Ascending aorta (tissue), 2 donors: ENCODE measurements at regions of chr5 and their contacts with region 1.

Region 1: DNA sequence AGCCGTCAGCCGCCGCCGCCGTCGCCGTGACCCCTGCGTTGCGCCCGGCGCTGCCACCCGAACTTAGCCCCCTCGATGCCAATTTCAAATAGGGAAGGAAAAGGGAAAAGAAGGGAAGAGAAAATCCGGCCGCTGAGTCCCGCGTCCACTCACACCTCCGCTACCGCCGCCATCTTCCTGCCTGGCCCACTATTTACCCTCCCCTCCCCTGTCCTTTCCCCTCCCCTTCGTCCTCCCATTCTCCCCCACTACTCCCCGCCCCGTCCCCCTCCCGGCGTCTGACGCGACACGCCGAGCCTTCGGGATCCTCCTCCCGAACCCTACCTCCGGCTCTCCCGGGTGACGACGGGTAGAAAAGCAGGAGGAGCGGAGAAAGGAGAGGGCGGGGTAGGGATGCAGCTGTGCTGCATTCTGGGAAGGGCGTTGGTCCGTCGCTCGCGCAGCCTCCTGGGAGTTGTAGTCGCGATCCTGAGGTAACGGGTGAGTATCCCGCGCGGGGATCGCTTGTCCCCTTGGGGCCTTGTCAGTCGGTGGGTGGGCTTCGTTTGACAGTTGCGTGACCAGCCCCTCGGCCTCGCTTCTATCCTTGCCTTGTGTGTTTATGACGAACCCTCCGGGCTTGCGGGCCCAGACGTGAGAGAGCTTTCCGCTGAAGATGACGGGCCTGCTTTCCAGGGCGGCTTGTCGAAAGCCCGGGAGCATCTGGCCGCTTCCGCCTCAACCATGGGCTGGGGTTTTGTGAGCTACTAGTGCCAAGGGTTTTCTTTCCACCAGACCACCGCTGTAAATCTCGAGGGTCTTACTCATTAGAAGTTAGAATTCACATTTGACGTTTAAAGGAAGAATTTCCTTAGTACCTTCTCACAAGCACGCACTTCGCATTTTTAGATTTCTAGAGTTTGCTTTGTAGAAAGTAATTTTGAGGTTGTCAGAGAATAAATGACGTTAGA is at the starts of genes CERT1 and POLK:
- DNase-seq: peak; percentile 93 to 99
- H3K4me3 ChIP-seq: peak within 1 kb of the TSS; percentile 86 to 95
- H3K27ac ChIP-seq: peak within 1 kb of the TSS; percentile 93 to 95
- H3K4me1 ChIP-seq: peaks cover 6 to 24% of the 10 kb centered on the region in 2 donors
- H3K27me3 ChIP-seq: no peaks in the 10 kb centered on the region
- CTCF ChIP-seq: no peak
- total RNA-seq, gene CERT1: 29.8 TPM
- total RNA-seq, gene POLK: 19.4 TPM

Region 2: DNA sequence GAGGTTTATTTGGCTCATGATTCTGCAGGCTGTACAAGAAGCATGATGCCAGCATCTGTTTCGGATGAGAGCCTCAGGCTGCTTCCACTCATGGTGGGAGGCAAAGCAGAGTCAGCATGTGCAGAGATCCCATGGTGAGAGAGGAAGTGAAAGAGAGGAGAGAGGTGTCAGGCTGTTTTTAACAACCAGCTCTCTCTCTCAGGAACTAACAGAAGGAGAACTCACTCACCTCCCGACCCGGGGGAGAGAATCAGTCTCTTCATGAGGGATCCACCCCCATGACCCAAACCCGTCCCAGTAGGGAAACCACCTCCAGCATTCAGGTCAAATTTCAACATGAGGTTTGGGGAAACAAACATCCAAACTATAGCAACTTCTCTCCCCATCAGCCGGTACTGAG is 1058.9 kb before region 1 on chr5:
- intact Hi-C with region 1: no loop called
- DNase-seq: no peak
- H3K4me3 ChIP-seq: no peak overlapping the region
- H3K27ac ChIP-seq: no peak overlapping the region
- H3K4me1 ChIP-seq: no peaks in the 10 kb centered on the region
- H3K27me3 ChIP-seq: no peaks in the 10 kb centered on the region
- CTCF ChIP-seq: no peak

Region 3: GRCh38 chr5:75236322-75237316 is 275.1 kb before region 1 on chr5 and contains the start of gene ANKRD31:
- intact Hi-C with region 1: loop called (anchors 5 kb)
- DNase-seq: peak; percentile 30 to 89
- H3K4me3 ChIP-seq: peak within 1 kb of the TSS; percentile 61 to 91
- H3K27ac ChIP-seq: peak within 1 kb of the TSS; percentile 75 to 76
- H3K4me1 ChIP-seq: no peaks in the 10 kb centered on the region
- H3K27me3 ChIP-seq: no peaks in the 10 kb centered on the region
- CTCF ChIP-seq: peak; percentile 59 to 92 (median 65)
- total RNA-seq, gene ANKRD31: not detected

Region 4: GRCh38 chr5:75574791-75575190 is 63.1 kb after region 1 on chr5:
- intact Hi-C with region 1: loop called (anchors 2 kb)
- DNase-seq: no peak
- H3K4me3 ChIP-seq: peak overlapping the region in 1 of 2 donors; percentile 16
- H3K27ac ChIP-seq: peak overlapping the region; percentile 53 to 60
- H3K4me1 ChIP-seq: peaks cover 3 to 27% of the 10 kb centered on the region in 2 donors
- H3K27me3 ChIP-seq: no peaks in the 10 kb centered on the region
- CTCF ChIP-seq: no peak

Region 5: DNA sequence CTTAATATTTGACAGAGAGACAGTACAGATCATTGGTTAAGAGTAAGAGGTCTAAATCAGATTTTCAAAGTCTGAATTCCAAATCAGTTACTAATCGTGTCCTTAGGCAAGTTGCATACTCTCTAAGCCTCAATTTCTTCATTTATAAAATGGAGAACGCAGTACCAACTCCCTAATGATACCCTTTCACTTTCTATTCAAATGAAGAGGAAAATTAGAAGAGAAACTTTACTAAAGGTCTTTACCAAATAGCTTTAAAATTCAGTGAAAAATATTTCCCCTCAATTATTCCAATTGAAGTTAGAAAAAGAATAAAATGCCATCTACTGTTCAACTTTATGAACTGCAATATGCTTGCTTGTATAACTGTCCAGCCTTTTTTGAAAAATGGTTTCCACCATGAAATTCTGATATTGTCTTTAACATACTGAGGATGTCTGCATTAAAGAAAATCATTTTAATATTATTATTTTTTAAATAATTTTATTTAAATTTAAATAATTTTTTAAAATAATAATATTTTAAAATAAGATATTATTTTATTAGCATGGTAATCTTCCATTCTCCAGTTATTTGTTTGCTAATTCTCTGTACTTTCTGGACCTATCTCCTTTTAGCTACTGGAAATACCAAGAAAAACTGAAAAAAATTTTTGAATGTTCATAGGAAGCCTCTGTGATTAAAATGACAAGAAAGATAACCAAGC is 169.6 kb after region 1 on chr5:
- intact Hi-C with region 1: loop called (anchors 10 kb)
- DNase-seq: no peak
- H3K4me3 ChIP-seq: peak overlapping the region in 1 of 2 donors; percentile 41
- H3K27ac ChIP-seq: no peak overlapping the region
- H3K4me1 ChIP-seq: no peaks in the 10 kb centered on the region
- H3K27me3 ChIP-seq: no peaks in the 10 kb centered on the region
- CTCF ChIP-seq: peak; percentile 47 to 83 (median 76)

Region 6: DNA sequence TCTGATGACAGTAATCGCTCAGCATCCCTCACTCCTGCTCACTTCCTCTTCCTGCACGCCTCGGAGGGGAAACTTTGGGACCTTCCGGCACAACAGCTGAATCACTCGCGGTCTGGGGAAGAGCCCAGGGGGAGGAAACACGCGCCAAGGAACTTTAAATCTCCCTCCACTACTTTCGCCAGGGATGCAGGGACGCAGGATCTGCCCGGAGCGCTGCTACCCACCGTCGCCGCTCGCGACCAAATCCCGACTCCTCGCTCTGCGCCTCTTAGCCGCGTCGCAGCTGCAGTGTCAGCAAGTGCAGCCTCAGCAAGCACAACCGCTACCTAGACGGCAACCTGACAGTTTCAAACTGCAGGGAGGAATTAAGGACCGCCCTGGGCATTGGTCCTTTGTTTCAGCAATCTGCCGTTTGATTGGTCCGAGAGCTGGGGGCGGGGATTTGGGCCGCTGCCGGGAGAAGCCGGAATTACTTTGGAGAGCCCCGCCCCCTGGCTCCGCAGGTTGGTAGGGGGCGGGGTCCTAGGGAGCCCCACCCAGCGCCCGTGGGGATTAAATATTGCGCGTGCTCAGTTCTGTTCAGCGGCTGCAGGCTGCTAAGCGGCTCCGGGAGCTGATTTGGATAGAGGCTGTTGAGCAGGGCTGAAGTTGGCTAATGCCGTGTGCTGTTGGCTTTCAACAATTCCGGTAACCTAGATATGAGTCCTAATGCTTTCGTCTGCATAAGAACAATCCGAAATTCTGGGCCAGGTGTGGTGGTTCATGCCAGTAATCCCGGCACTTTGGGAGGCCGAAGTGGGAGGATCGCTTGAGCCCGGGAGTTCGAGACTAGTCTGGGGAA is 205.6 kb after region 1 on chr5 and contains the start of gene POC5:
- intact Hi-C with region 1: loop called (anchors 2 kb)
- DNase-seq: peak; percentile 87 to 98
- H3K4me3 ChIP-seq: peak within 1 kb of the TSS; percentile 64 to 77
- H3K27ac ChIP-seq: peak within 1 kb of the TSS; percentile 72 to 75
- H3K4me1 ChIP-seq: peaks cover 0 to 10% of the 10 kb centered on the region in 2 donors
- H3K27me3 ChIP-seq: no peaks in the 10 kb centered on the region
- CTCF ChIP-seq: no peak
- total RNA-seq, gene POC5: 5.3 TPM